Activated CD8-positive, alpha-beta memory T cell treated with anti-CD3 and anti-CD28 coated beads, Interleukin-2, amount 10 ng/mL, durations not matched to agents 7 days and 5 days (primary cell): ENCODE measurements at regions of chr1 and their contacts with region 1.

Region 1: DNA sequence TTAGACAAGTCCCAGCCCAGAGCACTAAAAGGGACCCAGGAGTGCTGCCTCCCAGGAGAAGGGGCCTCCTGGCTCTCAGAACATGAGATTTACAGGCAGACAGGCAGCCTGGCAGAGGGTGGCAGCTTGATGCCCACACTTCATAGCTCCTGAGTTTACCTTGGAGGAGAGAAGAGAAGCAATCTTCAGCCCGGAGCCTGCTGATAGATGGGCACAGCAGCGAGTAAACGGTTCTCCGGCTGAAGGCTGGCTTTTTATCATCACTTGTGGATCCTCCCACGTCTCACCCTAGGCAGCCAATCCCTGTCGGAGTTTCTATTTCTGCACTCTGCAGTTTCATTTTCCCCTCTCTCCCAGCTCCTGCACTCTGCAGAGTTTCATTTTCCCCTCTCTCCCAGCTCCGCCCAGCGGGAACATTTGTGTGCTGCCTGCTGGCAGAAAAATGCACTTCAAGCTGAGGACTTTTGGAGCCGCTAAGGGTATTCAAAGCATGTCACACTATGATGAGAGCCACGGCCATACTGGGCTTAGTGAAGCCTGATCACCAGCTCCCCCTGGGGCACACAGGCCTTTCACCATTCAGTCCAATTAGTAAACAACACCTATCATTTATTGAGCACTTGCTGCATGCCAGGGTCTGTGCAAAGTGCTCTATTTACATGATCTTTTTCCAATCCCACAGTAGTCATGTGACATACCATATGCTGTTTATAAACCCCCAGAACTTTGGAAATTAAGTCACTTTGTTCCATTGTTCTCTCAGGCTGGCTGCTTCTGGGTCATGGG is at the start of gene IFI6:
- DNase-seq: peak; percentile 93
- ATAC-seq: peak; percentile 95
- H3K4me3 Mint-ChIP-seq: peak within 1 kb of the TSS; percentile 99
- H3K27ac Mint-ChIP-seq: peak within 1 kb of the TSS; percentile 98
- H3K4me1 Mint-ChIP-seq: peaks cover 45% of the 10 kb centered on the region
- H3K27me3 Mint-ChIP-seq: no peaks in the 10 kb centered on the region
- total RNA-seq, gene IFI6: 461 to 1,077 TPM

Region 2: DNA sequence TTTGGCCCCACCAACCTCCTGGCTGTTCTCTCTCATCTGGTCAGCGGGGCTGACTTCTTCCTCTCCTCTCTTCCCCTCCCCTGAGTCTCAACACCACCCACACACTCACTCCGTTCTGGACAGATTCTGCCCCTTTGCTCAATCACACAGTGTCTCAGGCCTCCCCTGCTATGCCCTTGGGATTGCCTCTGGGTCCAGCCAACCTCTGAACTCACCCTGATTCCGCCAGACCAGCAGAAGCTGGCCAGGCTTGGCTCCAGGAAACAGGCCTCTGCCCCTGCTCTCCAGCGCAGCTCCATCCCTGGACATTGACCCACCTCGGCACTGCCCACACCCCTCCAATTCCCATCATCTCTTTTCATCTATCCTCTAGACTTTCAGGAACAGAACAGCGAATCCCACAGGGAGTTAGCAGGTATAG is 90.3 kb before region 1 on chr1:
- CTCF ChIA-PET with region 1: no interaction called
- DNase-seq: no peak
- ATAC-seq: no peak
- H3K4me3 Mint-ChIP-seq: no peak overlapping the region
- H3K27ac Mint-ChIP-seq: no peak overlapping the region
- H3K4me1 Mint-ChIP-seq: peaks cover 9% of the 10 kb centered on the region
- H3K27me3 Mint-ChIP-seq: peaks cover 2% of the 10 kb centered on the region

Region 3: GRCh38 chr1:27603681-27604578 is 68.2 kb before region 1 on chr1 and contains the start of gene AHDC1:
- CTCF ChIA-PET with region 1: interaction called, 536 read pairs
- DNase-seq: peak; percentile 93
- ATAC-seq: peak; percentile 90
- H3K4me3 Mint-ChIP-seq: peak within 1 kb of the TSS; percentile 94
- H3K27ac Mint-ChIP-seq: peak within 1 kb of the TSS; percentile 70
- H3K4me1 Mint-ChIP-seq: peaks cover 37% of the 10 kb centered on the region
- H3K27me3 Mint-ChIP-seq: no peaks in the 10 kb centered on the region
- total RNA-seq, gene AHDC1: 15.8 to 18.5 TPM

Region 4: GRCh38 chr1:27656157-27656893 is 15.8 kb before region 1 on chr1:
- CTCF ChIA-PET with region 1: interaction called, 10 read pairs
- DNase-seq: no peak
- ATAC-seq: no peak
- H3K4me3 Mint-ChIP-seq: no peak overlapping the region
- H3K27ac Mint-ChIP-seq: no peak overlapping the region
- H3K4me1 Mint-ChIP-seq: peaks cover 27% of the 10 kb centered on the region
- H3K27me3 Mint-ChIP-seq: no peaks in the 10 kb centered on the region

Region 5: GRCh38 chr1:27719286-27720251 is 47.4 kb after region 1 on chr1:
- CTCF ChIA-PET with region 1: interaction called, 19 read pairs
- DNase-seq: no peak
- ATAC-seq: peak; percentile 57
- H3K4me3 Mint-ChIP-seq: no peak overlapping the region
- H3K27ac Mint-ChIP-seq: no peak overlapping the region
- H3K4me1 Mint-ChIP-seq: peaks cover under 1% of the 10 kb centered on the region
- H3K27me3 Mint-ChIP-seq: peaks cover 32% of the 10 kb centered on the region

Region 6: DNA sequence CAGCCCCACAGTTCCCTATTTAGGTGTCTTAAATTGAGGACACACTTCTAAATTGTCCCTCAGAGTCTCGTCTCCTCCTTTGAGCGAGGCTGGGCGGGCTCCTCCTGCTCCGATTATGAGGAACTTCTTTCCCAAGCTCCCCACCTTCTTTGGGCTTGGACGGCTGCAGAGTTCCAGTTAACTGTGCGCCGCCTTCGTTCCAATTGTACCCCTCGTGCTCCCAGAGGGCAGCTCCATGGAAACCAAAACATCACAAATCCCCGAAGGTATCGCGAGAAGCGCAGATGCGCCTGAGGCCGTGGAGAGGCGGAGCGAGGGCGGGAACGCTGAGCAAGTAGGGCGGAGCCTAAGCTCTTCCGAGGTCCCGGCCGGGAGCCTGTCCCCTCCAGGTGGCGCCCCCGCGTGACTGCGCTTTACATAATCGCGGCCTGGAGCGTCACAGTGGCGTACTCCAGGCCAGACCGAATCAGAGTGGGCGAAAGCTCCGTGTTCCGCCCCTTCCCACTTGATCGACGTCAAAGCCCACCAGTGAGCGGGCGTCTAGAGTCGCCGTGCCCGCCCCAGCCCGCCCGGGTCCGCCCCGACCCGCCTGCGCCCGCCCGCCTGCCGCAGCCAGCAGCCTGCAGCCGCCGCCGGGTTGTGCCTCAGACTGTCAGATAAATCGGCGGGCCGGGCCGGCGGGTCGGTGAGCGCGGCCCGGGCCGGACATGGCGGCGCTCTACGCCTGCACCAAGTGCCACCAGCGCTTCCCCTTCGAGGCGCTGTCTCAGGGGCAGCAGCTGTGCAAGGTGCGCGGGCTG is 53.4 kb after region 1 on chr1 and contains the start of gene FAM76A:
- CTCF ChIA-PET with region 1: interaction called, 19 read pairs
- DNase-seq: peak; percentile 100
- ATAC-seq: peak; percentile 93
- H3K4me3 Mint-ChIP-seq: peak within 1 kb of the TSS; percentile 84
- H3K27ac Mint-ChIP-seq: peak within 1 kb of the TSS; percentile 93
- H3K4me1 Mint-ChIP-seq: peaks cover 20% of the 10 kb centered on the region
- H3K27me3 Mint-ChIP-seq: peaks cover 2% of the 10 kb centered on the region
- total RNA-seq, gene FAM76A: 11.8 to 13.2 TPM

Region 7: GRCh38 chr1:27772933-27773825 is 101.0 kb after region 1 on chr1 and contains the start of gene STX12:
- CTCF ChIA-PET with region 1: interaction called, 33 read pairs
- DNase-seq: peak; percentile 100
- ATAC-seq: peak; percentile 98
- H3K4me3 Mint-ChIP-seq: peak within 1 kb of the TSS; percentile 86
- H3K27ac Mint-ChIP-seq: peak within 1 kb of the TSS; percentile 97
- H3K4me1 Mint-ChIP-seq: peaks cover 33% of the 10 kb centered on the region
- H3K27me3 Mint-ChIP-seq: no peaks in the 10 kb centered on the region
- total RNA-seq, gene STX12: 20.4 to 29.5 TPM

Region 8: GRCh38 chr1:27830621-27831424 is 158.7 kb after region 1 on chr1 and contains the start of gene PPP1R8:
- CTCF ChIA-PET with region 1: interaction called, 21 read pairs
- DNase-seq: peak; percentile 92
- ATAC-seq: peak; percentile 98
- H3K4me3 Mint-ChIP-seq: peak within 1 kb of the TSS; percentile 94
- H3K27ac Mint-ChIP-seq: peak within 1 kb of the TSS; percentile 85
- H3K4me1 Mint-ChIP-seq: peaks cover 37% of the 10 kb centered on the region
- H3K27me3 Mint-ChIP-seq: no peaks in the 10 kb centered on the region
- total RNA-seq, gene PPP1R8: 57.4 to 68.7 TPM